ENCODE measurements at regions of chr3 and their contacts with region 1.

Region 1: DNA sequence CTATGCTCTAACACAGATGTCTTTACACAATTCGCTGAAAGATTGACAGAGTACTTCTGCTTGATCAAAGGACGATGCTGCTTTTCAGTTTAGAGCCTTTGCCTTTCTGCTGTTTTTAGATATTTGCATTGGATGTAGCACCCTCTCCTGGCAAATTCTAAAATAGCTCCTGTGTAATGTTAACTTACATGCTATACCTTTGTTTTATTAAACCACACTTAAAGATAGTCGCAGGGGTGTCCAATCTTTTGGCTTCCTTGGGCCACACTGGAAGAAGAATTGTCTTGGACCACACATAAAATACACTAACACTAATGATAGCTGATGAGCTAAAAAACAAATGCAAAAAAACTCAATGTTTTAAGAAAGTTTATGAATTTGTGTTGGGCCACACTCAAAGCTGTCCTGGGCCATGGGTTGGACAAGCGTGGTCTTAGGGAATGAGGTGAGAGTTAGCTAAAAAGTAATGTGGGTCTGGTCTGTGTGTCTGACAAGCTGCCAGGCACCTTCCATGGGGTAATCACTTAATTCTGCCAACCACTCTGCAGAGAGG is 62.9 kb downstream of the ATG7 start:
- DNase-seq: peak; percentile 62
- CTCF ChIP-seq: peak; percentile 68

Region 2: GRCh38 chr3:11060500-11061251 is 274.5 kb before region 1 on chr3:
- CTCF ChIA-PET with region 1: interaction called, 16 read pairs
- POLR2A ChIA-PET with region 1: no interaction called
- DNase-seq: peak; percentile 69
- CTCF ChIP-seq: peak; percentile 55

Region 3: GRCh38 chr3:11096266-11097135 is 238.6 kb before region 1 on chr3:
- CTCF ChIA-PET with region 1: no interaction called
- POLR2A ChIA-PET with region 1: no interaction called
- DNase-seq: peak; percentile 29
- CTCF ChIP-seq: no peak

Region 4: DNA sequence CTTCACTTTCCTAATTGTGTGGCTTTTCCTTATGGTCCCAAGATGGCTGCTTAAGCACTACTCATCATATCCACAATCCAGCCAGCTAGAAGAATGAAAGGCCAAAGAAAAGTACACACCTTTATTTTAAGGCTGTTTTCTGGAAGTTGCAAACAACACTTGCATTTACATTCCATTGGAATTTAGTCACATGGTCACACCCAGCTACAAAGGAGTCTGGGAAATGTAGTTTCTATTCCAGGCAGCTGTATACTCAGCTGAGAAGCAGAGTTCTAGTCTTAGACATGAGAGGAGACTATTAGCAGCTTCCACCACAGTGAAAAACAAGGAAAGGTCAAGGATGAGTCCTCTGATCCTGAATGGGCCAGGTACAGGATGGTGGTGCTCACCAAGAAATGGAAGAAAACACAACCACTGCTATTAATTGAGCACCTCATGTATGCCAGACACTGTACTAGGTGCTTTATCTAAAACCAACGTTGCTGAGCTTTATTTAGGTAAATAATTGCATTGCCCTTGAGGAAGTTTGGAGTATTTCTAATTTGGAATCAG is 90.9 kb before region 1 on chr3:
- CTCF ChIA-PET with region 1: interaction called, 101 read pairs
- POLR2A ChIA-PET with region 1: no interaction called
- DNase-seq: no peak
- CTCF ChIP-seq: no peak

Region 5: GRCh38 chr3:11323813-11324212 is 11.3 kb before region 1 on chr3:
- CTCF ChIA-PET with region 1: interaction called, 22 read pairs
- POLR2A ChIA-PET with region 1: no interaction called
- DNase-seq: no peak
- CTCF ChIP-seq: no peak

Region 6: DNA sequence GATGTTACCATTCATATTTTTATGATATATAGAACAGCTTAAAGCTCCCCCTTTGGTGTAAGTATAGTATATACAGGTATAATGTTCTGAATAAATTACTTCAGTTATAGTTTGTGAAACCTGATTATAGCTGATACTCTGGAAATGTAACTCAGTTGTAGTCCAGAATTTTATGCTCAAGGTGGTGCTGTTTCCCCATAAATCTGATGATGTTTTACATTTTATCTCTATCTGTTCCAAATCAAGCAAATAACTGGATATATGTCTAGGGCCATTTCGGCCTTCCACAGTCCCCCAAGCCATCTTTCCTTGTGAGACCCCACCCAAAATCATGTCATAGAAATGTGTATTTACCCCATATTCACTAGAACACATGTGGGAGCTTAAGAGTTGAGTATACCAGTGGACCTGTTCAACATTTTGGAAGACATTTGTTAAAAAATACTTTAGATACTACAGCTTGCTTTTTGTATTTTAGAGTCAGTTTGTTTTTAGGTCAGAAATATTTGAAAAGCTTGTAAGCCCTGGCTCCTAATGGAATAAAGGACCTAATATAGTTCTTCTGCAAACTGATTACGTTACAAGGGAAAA is 44.2 kb after region 1 on chr3:
- CTCF ChIA-PET with region 1: interaction called, 11 read pairs
- POLR2A ChIA-PET with region 1: no interaction called
- DNase-seq: peak; percentile 26
- CTCF ChIP-seq: peak; percentile 50

Region 7: DNA sequence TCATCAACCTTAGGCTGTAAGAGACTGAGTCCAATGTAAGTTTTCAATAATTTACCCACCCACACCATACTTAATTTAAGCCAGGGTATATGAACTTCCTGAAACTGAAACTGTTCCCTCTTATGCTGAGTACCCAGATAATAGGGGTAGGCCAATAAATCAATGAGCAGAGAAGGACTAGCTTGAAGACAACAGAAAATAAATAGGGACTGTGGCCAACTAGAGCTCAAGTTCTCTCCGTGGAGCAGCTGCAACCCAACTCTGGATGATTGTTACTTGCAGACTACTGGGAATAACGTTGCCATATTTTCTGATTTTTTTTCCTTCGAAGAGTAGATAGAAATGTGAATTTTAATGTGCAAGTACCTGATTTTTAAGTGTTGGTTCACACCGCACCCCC is 65.1 kb after region 1 on chr3:
- CTCF ChIA-PET with region 1: no interaction called
- POLR2A ChIA-PET with region 1: no interaction called
- DNase-seq: no peak
- CTCF ChIP-seq: no peak

Measured in GM10248 (cell line).